AG04449 (cell line): ENCODE measurements at regions of chr3 and their contacts with region 1.

Region 1: DNA sequence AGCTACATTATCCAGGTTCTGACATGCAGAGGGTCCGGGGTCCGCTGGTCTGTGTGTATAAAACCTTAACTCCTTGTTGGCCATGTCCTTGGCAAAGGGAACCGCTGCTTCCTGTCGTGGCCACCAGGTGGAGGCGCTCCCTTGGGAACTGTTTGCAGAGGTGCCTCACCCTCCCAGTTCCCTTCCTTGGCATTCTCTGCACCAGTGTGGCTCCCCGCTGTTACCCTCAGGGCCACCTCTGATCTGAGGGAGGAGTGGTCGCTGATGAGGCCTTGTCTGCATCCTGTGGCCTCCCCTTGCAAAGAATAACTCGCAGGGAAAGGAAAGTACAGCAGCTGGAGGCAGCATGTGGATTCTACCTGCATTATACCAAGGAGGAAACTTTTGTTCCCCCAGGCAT is 89.6 kb downstream of the CHRD start:
- DNase-seq: no peak
- H3K4me3 ChIP-seq: no peak overlapping the region
- CTCF ChIP-seq: peak; percentile 58

Region 2: DNA sequence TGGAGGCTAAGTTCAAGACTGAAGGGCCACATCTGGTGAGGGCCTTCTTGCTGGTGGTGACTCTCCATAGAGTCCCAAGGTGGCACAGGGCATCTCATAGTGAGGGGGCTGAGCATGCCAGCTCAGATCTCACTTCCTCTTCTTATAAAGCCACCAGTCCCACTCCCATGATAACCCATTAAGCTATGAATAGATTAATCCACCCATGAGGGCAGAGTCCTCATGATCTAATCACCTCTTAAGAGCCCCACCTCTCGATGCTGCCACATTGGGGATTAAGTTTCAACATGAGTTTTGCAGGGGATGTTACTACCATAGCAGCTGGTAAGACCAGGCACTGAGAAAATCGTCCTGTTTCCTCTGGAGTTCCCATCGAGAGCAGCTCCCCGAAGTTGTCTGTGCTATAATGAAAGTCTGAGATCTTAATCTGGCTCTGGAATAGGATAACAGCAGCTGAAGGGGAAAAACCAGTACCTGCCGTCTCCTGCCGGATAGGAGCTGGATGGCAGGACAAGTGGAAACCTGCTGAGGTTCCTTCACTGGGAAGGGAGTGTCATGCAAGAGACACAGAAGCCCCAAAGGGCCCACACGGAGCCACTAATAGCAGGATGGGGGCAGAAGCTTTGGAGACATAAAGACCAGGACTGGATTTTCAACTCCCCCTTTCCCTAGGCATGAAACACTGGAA is 12.7 kb after region 1 on chr3:
- CTCF ChIA-PET with region 1: interaction called, 31 read pairs
- POLR2A ChIA-PET with region 1: no interaction called
- DNase-seq: no peak
- H3K4me3 ChIP-seq: no peak overlapping the region
- CTCF ChIP-seq: no peak